ENCODE measurements at regions of chr3 and their contacts with region 1.

Region 1: GRCh38 chr3:16090024-16090423 is 84.5 kb upstream of the GALNT15 start:
- DNase-seq: peak; percentile 5 to 80
- H3K4me3 ChIP-seq: no peak overlapping the region
- H3K27ac ChIP-seq: no peak overlapping the region
- H3K4me1 ChIP-seq: peaks cover 21% of the 10 kb centered on the region
- H3K27me3 ChIP-seq: no peaks in the 10 kb centered on the region
- CTCF ChIP-seq: no peak

Region 2: DNA sequence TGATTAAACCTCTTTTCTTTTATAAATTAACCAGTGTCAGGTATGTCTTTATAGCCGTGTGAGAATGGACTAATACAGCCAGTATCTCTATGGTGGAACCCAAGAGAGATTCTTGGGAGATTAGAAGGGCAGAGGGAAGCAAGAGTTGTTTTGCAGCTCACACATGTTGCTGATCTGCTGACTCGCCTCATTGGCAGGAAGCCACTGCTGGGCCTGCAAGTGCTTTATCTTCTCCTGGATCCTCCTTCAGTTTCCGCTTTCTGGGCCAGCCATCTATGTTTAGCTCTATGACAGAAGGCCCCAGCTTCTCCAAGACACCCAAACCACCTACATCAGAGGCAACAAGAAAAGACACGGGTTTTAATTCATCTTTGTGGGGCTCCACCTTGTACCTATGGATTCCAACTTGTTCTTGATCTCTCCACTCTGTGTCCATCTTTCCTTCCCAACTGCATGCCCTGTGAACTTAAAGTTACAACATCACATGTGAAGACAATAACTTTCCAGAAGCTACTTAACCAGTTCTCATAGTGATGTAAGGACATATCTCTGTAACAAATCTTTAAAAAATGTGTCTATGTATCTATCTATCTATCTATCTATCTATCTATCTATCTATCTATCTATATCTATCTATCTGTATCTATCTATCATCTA is 61.2 kb after region 1 on chr3:
- CTCF ChIA-PET with region 1: no interaction called
- POLR2A ChIA-PET with region 1: interaction called, 20 read pairs
- intact Hi-C with region 1: no loop called
- DNase-seq: no peak
- H3K4me3 ChIP-seq: no peak overlapping the region
- H3K27ac ChIP-seq: no peak overlapping the region
- H3K4me1 ChIP-seq: peaks cover 3% of the 10 kb centered on the region; the same call in 1 of the 2 replicates
- H3K27me3 ChIP-seq: no peaks in the 10 kb centered on the region
- CTCF ChIP-seq: no peak

Region 3: GRCh38 chr3:16404349-16404895 is 314.4 kb after region 1 on chr3:
- CTCF ChIA-PET with region 1: no interaction called
- POLR2A ChIA-PET with region 1: no interaction called
- intact Hi-C with region 1: no loop called
- DNase-seq: no peak
- H3K4me3 ChIP-seq: no peak overlapping the region
- H3K27ac ChIP-seq: no peak overlapping the region
- H3K4me1 ChIP-seq: no peaks in the 10 kb centered on the region
- H3K27me3 ChIP-seq: peaks cover 9% of the 10 kb centered on the region; the same call in 1 of the 2 replicates
- CTCF ChIP-seq: no peak